Activated T-helper 1 cell treated with anti-CD3 and anti-CD28 coated beads, Interleukin-12 subunit alpha, Interleukin-12 subunit beta, Interleukin-2, Interleukin-4 antibody, amounts not matched to agents 30 ng/mL and 10 ng/mL and 1 ng/mL, durations not matched to agents 14 hours and 24 hours and 36 hours (primary cell): ENCODE measurements at regions of chr3 and their contacts with region 1.

Region 1: GRCh38 chr3:137105277-137105977 is 147.6 kb downstream of the IL20RB start:
- DNase-seq: no peak
- H3K4me3 Mint-ChIP-seq: no peak overlapping the region
- H3K27ac Mint-ChIP-seq: no peak overlapping the region
- H3K4me1 Mint-ChIP-seq: no peaks in the 10 kb centered on the region
- H3K27me3 Mint-ChIP-seq: peaks cover 13% of the 10 kb centered on the region

Region 2: DNA sequence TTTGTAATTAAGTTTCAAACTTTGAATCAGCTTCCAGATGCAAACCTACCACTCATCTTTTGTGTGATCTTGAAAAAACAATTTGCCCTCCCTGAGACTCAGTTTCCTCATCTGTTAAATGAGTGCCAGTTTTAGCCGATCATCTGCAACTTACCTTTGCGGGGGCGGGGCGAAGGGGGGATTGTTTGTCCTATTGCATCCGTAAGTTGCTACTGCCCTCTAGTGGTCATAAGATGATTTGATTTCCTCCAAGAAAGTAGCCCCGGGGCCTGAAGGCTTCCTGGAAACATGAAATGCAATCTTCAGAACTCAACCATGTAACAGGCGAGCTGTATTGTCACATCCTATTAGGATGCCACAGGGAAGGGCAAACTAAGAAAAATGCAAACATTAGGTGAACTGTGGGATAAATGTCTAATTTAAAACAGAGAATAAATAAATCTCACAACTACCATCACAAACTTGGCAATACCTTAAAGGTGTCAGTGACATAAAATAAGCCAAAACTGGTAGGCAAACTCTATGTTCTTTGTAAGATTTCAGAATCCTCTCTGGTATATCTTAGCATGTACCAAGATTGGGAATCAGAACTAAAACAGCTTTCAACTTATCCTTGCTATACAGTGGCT is 841.0 kb after region 1 on chr3:
- intact Hi-C with region 1: loop called (anchors 1 kb)
- DNase-seq: peak; percentile 7
- H3K4me3 Mint-ChIP-seq: no peak overlapping the region
- H3K27ac Mint-ChIP-seq: no peak overlapping the region
- H3K4me1 Mint-ChIP-seq: peaks cover 5% of the 10 kb centered on the region
- H3K27me3 Mint-ChIP-seq: peaks cover 12% of the 10 kb centered on the region

Region 3: DNA sequence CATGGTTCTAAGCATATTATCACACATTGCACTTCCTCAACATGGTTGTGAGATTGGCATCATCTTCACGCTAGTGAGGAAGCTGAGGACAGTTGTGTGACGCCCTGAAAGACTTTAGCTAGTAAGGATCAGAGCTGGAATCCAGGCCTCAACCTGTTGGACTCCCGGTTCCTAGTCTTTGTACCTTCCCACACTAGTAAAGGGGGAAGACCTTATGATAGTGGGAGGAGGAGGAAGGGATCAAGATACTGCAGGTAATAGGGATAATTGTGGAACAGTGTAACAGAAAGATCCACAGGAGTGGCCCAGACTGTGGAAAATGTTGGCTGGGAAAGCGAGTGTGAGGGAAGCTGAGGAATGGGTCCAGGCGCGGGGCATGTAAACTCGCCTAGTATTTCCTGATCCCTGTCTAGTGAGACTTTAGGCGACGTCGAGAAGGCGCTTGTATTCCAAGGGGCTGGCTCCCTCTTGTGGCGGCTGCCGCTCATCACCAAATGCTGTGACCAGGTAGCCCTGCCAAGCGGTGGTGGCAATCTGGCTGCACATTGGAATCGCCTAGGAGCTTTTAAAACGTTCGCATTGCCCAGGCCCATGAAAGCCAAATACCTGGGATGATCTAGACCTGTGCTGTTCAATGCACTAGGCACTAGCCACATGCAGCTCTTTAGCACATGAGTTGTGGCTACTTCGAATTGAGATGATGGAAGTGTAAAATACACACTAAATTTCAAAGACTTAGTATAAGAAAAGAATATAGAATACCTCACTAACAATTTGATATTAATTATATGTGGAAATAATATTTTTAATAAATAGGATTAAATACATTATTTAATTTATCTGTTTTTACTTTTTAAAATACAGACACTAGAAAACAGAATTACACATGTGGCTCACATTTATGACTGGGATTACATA is 865.7 kb after region 1 on chr3:
- intact Hi-C with region 1: loop called (anchors 1 kb)
- DNase-seq: peak; percentile 22
- H3K4me3 Mint-ChIP-seq: no peak overlapping the region
- H3K27ac Mint-ChIP-seq: no peak overlapping the region
- H3K4me1 Mint-ChIP-seq: peaks cover 5% of the 10 kb centered on the region
- H3K27me3 Mint-ChIP-seq: peaks cover 14% of the 10 kb centered on the region